ENCODE measurements at regions of chr7 and their contacts with region 1.

Region 1: GRCh38 chr7:99314504-99314903 is 11.2 kb upstream of the ARPC1A start:
- DNase-seq: no peak
- H3K4me3 ChIP-seq: no peak overlapping the region
- H3K27ac ChIP-seq: no peak overlapping the region
- H3K4me1 ChIP-seq: no peaks in the 10 kb centered on the region
- H3K27me3 ChIP-seq: no peaks in the 10 kb centered on the region
- CTCF ChIP-seq: no peak
- POLR2A ChIP-seq: no peak

Region 2: GRCh38 chr7:99036546-99037111 is 277.9 kb before region 1 on chr7:
- intact Hi-C with region 1: loop called (anchors 2 kb)
- DNase-seq: no peak
- H3K4me3 ChIP-seq: no peak overlapping the region
- H3K27ac ChIP-seq: no peak overlapping the region
- H3K4me1 ChIP-seq: peaks cover 10% of the 10 kb centered on the region
- H3K27me3 ChIP-seq: no peaks in the 10 kb centered on the region
- CTCF ChIP-seq: no peak
- POLR2A ChIP-seq: no peak

Measured in vagina (tissue), 2 donors.